Common myeloid progenitor, CD34-positive (primary cell): ENCODE measurements at regions of chr11 and their contacts with region 1.

Region 1: GRCh38 chr11:34098813-34099212 is 6.6 kb upstream of the NAT10 start:
- DNase-seq: no peak
- H3K4me3 ChIP-seq: no peak overlapping the region
- H3K27ac ChIP-seq: no peak overlapping the region
- H3K4me1 ChIP-seq: no peaks in the 10 kb centered on the region
- H3K27me3 ChIP-seq: no peaks in the 10 kb centered on the region

Region 2: GRCh38 chr11:34086554-34087283 is 12.1 kb before region 1 on chr11:
- CTCF ChIA-PET with region 1: interaction called, 10 read pairs
- POLR2A ChIA-PET with region 1: no interaction called
- DNase-seq: peak in 1 of 3 donors; percentile 31
- H3K4me3 ChIP-seq: no peak overlapping the region
- H3K27ac ChIP-seq: peak overlapping the region in 1 of 2 experiments; percentile 43
- H3K4me1 ChIP-seq: peaks cover 0 to 4% (median 0%) of the 10 kb centered on the region in 4 experiments
- H3K27me3 ChIP-seq: no peaks in the 10 kb centered on the region

Region 3: GRCh38 chr11:34234086-34234740 is 135.4 kb after region 1 on chr11:
- CTCF ChIA-PET with region 1: no interaction called
- POLR2A ChIA-PET with region 1: no interaction called
- DNase-seq: peak; percentile 76 to 96 (median 95)
- H3K4me3 ChIP-seq: no peak overlapping the region
- H3K27ac ChIP-seq: no peak overlapping the region
- H3K4me1 ChIP-seq: peaks cover 0 to 10% (median 5%) of the 10 kb centered on the region in 4 experiments
- H3K27me3 ChIP-seq: no peaks in the 10 kb centered on the region